ENCODE measurements at regions of chr12 and their contacts with region 1.

Region 1: GRCh38 chr12:120686690-120687577 is at the start of gene MLEC:
- DNase-seq: peak; percentile 99
- ATAC-seq: peak; percentile 89 to 95 (median 94)
- H3K4me3 ChIP-seq: peak within 1 kb of the TSS; percentile 68 to 98 (median 90)
- H3K27ac ChIP-seq: peak within 1 kb of the TSS; percentile 84 to 97 (median 94)
- H3K4me1 ChIP-seq: peaks cover 0 to 59% (median 46%) of the 10 kb centered on the region in 12 donors
- H3K27me3 ChIP-seq: no peaks in the 10 kb centered on the region
- CTCF ChIP-seq: peak in 9 of 12 donors; percentile 4 to 43 (median 13)
- POLR2A ChIP-seq: peak in 1 of 2 donors; percentile 98
- total RNA-seq, gene MLEC: 91.0 to 150 (median 117) TPM

Region 2: DNA sequence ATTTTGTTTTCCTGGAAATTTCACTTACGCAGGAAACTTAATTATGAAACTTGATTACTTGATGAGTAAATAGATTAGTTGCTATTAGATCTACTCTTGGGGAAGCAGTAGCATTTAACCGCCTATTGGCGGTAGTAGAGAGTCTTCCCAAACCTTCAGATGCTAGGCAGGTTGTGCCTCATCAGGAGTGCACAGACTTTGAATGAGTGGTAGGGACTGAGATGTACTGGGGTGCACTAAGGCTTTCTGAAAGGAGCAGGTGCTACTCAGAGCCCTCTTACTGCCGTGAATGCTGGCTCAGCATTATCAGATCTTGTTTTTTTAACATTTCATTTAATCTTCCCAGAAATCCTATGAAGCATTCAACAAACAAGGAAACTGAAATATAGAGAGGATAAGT is 233.0 kb before region 1 on chr12:
- intact Hi-C with region 1: no loop called
- DNase-seq: no peak
- ATAC-seq: peak in 1 of 4 donors; percentile 36
- H3K4me3 ChIP-seq: no peak overlapping the region
- H3K27ac ChIP-seq: no peak overlapping the region
- H3K4me1 ChIP-seq: no peaks in the 10 kb centered on the region
- H3K27me3 ChIP-seq: no peaks in the 10 kb centered on the region
- CTCF ChIP-seq: peak in 11 of 12 donors; percentile 23 to 71 (median 51)
- POLR2A ChIP-seq: no peak

Region 3: DNA sequence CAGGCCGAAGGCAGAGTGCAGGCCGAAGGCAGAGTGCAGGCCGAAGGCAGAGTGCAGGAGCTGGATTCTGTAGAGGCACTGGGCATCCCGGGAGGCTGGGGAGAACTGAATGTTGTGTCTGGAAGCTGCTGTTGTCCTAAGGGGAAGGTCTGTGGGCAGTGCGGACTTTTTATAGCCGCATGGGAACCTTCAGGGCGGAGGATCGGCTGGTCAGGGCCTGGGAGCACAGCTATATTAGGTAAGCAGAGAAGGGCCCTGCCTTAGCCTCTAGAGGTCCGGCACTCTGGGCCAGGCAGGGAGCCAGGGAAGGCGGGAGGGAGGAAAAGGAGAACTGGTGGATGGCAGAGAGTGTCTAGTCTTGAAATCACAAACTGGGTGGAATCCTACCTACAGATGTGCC is 32.3 kb before region 1 on chr12:
- intact Hi-C with region 1: loop called in 8 of 10 experiments (anchors 2 to 5 kb)
- DNase-seq: peak; percentile 75 to 88 (median 81)
- ATAC-seq: peak; percentile 88 to 93 (median 90)
- H3K4me3 ChIP-seq: peak overlapping the region in 3 of 12 donors; percentile 12 to 19 (median 14)
- H3K27ac ChIP-seq: peak overlapping the region; percentile 59 to 85 (median 79)
- H3K4me1 ChIP-seq: peaks cover 0 to 50% (median 35%) of the 10 kb centered on the region in 12 donors
- H3K27me3 ChIP-seq: peaks cover 0 to 1% (median 0%) of the 10 kb centered on the region in 9 donors
- CTCF ChIP-seq: no peak
- POLR2A ChIP-seq: no peak

Region 4: DNA sequence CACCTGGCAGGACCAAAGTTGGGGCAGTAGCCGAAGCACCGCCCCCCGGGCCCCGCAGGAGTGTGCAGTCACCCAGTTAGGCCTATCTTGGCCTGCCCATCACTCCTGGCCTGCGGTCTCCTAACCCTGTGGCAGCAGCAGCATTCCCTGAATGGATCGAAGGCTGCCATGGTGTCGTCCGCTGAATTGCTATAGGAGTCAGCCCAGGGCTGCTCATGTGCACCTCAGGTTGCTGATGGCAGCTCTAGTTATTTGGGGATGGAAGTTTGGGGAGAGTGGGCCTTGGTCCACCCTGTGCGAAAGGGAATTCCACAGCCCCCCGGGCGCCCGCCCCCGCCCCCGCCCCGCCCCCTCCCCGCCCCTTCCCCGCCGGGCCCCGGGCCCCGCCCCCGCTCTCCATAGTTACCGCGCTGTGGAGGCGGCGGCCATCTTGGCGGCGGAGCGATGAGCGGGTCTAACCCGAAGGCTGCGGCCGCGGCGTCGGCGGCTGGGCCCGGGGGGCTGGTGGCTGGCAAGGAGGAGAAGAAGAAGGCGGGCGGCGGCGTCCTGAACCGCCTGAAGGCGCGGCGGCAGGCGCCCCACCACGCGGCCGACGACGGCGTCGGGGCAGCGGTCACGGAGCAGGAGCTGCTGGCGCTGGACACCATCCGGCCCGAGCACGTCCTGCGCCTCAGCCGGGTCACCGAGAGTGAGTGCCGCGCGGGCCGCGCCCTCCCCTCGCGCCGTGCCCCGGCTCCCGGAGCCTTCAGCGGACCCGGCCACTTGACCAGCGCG is 23.3 kb after region 1 on chr12 and contains the start of gene UNC119B:
- intact Hi-C with region 1: loop called in 6 of 10 experiments (anchors 2 kb)
- DNase-seq: peak; percentile 71 to 89 (median 82)
- ATAC-seq: peak; percentile 47 to 95 (median 90)
- H3K4me3 ChIP-seq: peak within 1 kb of the TSS; percentile 54 to 99 (median 82)
- H3K27ac ChIP-seq: peak within 1 kb of the TSS; percentile 70 to 95 (median 90)
- H3K4me1 ChIP-seq: peaks cover 4 to 35% (median 27%) of the 10 kb centered on the region in 12 donors
- H3K27me3 ChIP-seq: no peaks in the 10 kb centered on the region
- CTCF ChIP-seq: no peak
- POLR2A ChIP-seq: no peak
- total RNA-seq, gene UNC119B: 9.1 to 12.6 (median 10.7) TPM

Region 5: DNA sequence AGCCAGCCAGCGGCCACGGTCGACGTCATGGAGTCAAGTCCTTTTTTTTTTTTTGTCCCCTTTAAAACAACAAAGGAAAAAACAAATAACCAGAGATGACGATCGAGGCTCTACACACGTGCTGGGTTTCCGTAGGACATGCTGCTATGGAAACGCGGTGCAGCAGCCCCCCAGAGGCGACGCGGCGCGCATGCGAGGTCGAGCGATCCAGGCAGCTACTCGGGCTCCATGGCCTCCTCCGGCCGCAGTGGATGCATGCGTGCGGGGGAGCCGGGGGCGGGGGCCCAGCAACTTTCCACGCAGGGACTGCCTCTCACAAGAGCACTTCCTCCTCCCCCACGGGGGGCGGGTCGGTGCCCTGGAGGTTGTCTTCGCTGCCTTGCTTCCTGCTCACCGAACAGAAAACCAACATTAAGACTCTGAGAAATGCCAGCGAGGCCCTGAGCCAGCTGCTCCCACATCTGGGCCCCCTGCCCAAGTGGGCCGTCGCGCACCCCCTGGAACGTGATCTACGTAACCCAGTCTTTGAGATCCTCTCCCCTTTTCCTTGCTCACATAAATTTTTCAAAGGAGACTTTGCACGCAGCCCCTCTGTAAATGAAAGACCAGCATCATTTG is 553.7 kb after region 1 on chr12:
- intact Hi-C with region 1: no loop called
- DNase-seq: peak; percentile 73 to 88 (median 81)
- ATAC-seq: peak; percentile 60 to 82 (median 76)
- H3K4me3 ChIP-seq: peak overlapping the region in 10 of 12 donors; percentile 7 to 47 (median 37)
- H3K27ac ChIP-seq: peak overlapping the region in 10 of 12 donors; percentile 15 to 74 (median 47)
- H3K4me1 ChIP-seq: peaks cover 0 to 43% (median 0%) of the 10 kb centered on the region in 12 donors
- H3K27me3 ChIP-seq: no peaks in the 10 kb centered on the region
- CTCF ChIP-seq: no peak
- POLR2A ChIP-seq: no peak